T-cell (primary cell): ENCODE measurements at regions of chr9 and their contacts with region 1.

Region 1: DNA sequence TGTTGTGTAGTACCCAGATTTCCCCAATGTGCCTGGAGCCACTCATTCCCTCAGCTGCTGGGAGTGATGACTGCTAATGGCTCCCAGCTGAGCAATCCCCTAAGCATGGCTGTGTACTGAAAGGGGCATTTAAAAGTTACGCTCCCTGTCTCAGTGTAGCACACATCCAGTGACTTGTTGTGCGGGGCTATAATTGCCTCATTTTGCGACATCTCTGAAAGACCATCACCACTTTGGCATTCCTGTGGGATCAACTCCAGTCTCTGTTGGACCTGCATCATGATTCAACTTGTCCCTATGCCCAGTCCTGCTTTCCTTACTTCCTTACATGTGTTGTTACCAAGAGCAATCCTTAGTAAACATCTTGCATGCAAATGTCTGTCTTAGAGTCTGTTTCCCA is 201.2 kb upstream of the MPDZ start:
- DNase-seq: no peak
- ATAC-seq: no peak
- H3K4me3 ChIP-seq: no peak overlapping the region
- H3K4me3 Mint-ChIP-seq: no peak overlapping the region
- H3K27ac ChIP-seq: no peak overlapping the region
- H3K27ac Mint-ChIP-seq: no peak overlapping the region
- H3K4me1 ChIP-seq: no peaks in the 10 kb centered on the region
- H3K4me1 Mint-ChIP-seq: no peaks in the 10 kb centered on the region
- H3K27me3 ChIP-seq: no peaks in the 10 kb centered on the region
- H3K27me3 Mint-ChIP-seq: peaks cover 0 to 5% of the 10 kb centered on the region in 2 donors

Region 2: GRCh38 chr9:13461414-13461991 is 19.2 kb before region 1 on chr9:
- CTCF ChIA-PET with region 1: no interaction called
- POLR2A ChIA-PET with region 1: no interaction called
- DNase-seq: no peak
- ATAC-seq: no peak
- H3K4me3 ChIP-seq: no peak overlapping the region
- H3K4me3 Mint-ChIP-seq: no peak overlapping the region
- H3K27ac ChIP-seq: no peak overlapping the region
- H3K27ac Mint-ChIP-seq: no peak overlapping the region
- H3K4me1 ChIP-seq: no peaks in the 10 kb centered on the region
- H3K4me1 Mint-ChIP-seq: no peaks in the 10 kb centered on the region
- H3K27me3 ChIP-seq: no peaks in the 10 kb centered on the region
- H3K27me3 Mint-ChIP-seq: no peaks in the 10 kb centered on the region

Region 3: DNA sequence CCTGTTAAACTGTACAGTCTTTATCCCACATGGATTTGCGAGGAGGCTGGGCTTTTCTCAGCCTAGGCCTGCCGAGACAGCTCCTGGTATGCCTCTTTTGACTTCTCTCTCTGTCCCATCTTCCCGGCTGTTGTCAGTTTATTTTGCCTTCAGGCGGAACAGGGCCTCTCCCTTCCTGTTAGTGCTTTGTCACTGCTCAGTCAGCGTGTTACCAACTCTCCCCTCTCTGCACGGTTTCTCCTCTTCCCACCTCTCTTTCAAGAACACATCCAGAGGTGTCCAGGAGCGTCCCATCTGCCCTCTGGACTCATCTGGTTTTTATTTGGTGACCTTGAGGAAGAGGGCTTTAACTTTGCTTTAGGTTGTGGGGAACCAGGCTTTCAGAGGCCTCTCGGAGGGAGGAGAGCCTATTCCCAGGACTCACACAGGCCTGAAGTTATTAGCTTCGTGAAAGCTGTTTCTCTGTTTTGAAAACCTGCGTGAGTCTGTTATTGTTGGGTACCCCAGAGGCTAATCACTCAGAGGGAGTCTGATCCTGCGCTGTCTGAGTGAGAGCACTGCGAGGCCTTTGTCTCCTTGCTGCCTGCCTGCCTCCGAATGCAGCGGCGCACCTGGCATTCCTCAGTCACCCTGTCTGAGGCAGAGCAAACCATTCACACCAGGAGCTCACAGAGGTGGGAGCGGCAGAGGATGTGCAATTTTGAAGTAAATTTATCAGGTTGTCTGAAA is 33.2 kb after region 1 on chr9:
- CTCF ChIA-PET with region 1: no interaction called
- POLR2A ChIA-PET with region 1: interaction called in 1 of 2 experiments, 10 read pairs
- DNase-seq: no peak
- ATAC-seq: no peak
- H3K4me3 ChIP-seq: no peak overlapping the region
- H3K4me3 Mint-ChIP-seq: no peak overlapping the region
- H3K27ac ChIP-seq: no peak overlapping the region
- H3K27ac Mint-ChIP-seq: no peak overlapping the region
- H3K4me1 ChIP-seq: no peaks in the 10 kb centered on the region
- H3K4me1 Mint-ChIP-seq: no peaks in the 10 kb centered on the region
- H3K27me3 ChIP-seq: no peaks in the 10 kb centered on the region
- H3K27me3 Mint-ChIP-seq: no peaks in the 10 kb centered on the region